Gastrocnemius medialis (tissue), 4 donors: ENCODE measurements at regions of chr4 and their contacts with region 1.

Region 1: DNA sequence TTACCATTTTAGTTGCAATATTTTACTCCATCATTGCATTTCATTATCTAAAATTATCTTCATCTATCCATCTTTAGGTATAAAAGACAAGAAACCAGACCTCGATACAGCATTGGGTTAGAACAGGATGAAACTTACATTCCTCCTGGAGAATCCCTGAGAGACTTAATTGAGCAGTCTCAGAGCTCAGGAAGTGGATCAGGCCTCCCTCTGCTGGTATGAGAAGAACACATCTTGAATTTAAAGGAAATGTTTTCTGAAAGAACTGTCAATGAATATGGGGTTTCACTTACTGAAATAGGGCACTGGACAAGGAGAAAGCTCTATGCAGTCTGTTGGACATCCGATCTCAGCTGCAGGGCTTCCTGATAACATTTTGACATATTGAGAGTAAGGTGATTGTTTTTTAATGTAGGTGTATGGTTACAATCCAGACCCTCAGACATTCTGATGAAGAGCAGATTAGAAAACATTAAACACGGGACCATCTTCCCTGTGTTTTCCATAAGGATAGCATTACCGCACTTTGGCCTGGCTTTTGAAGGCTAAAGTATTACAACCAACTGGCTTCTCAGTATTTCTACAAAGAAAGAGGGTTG is 367.2 kb downstream of the BMPR1B start:
- DNase-seq: no peak
- ATAC-seq: no peak
- H3K4me3 ChIP-seq: no peak overlapping the region
- H3K27ac ChIP-seq: no peak overlapping the region
- H3K4me1 ChIP-seq: no peaks in the 10 kb centered on the region
- H3K27me3 ChIP-seq: no peaks in the 10 kb centered on the region
- CTCF ChIP-seq: peak in 3 of 5 experiments; percentile 28 to 44 (median 30)
- POLR2A ChIP-seq: no peak

Region 2: GRCh38 chr4:93947286-93947685 is 1177.7 kb before region 1 on chr4:
- in situ Hi-C with region 1: no loop called
- intact Hi-C with region 1: no loop called
- DNase-seq: no peak
- ATAC-seq: no peak
- H3K4me3 ChIP-seq: no peak overlapping the region
- H3K27ac ChIP-seq: no peak overlapping the region
- H3K4me1 ChIP-seq: no peaks in the 10 kb centered on the region
- H3K27me3 ChIP-seq: no peaks in the 10 kb centered on the region
- CTCF ChIP-seq: no peak
- POLR2A ChIP-seq: no peak

Region 3: DNA sequence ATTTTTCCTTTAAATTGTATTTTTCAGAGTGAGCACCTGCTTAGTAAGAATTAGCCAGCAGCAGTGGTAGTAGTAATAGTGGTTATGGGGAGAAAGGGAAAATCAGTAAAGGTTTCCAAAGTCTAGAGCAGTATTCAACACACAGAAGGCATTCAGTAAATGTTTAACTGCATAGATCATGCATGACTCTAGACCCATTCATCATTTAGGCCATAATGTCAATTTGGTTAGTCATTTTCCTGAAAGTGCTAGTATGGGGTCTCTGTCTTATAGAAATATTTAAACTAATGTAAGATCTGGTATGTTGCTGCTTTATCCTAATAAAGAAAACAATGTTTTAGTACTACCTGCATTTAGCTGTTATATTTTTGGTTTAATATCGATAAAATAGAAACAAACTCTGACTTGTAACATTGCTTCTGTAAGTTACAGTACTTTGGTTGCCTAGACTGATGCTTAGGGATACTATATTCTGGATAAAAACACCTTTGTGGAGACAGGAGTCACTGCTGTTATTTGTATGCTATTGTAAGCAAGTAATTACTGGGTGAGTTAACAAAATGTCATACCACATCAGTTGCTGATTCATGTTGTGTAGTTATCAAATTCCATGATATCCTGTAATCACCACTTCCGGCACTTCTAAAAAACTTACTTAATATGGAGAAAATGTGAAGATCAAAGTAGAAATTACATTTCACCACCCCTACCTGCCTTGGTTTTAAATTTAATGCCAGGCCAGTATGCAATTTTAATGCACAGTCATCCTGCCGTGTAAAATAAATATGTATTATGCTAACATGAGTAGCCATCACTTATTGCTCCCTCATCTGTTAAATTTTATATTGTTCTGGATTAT is 483.1 kb before region 1 on chr4:
- in situ Hi-C with region 1: loop called in 1 of 4 experiments (anchors 25 kb)
- intact Hi-C with region 1: no loop called
- DNase-seq: no peak
- ATAC-seq: no peak
- H3K4me3 ChIP-seq: no peak overlapping the region
- H3K27ac ChIP-seq: no peak overlapping the region
- H3K4me1 ChIP-seq: peaks cover 0 to 3% of the 10 kb centered on the region in 2 donors
- H3K27me3 ChIP-seq: no peaks in the 10 kb centered on the region
- CTCF ChIP-seq: no peak
- POLR2A ChIP-seq: no peak

Region 4: DNA sequence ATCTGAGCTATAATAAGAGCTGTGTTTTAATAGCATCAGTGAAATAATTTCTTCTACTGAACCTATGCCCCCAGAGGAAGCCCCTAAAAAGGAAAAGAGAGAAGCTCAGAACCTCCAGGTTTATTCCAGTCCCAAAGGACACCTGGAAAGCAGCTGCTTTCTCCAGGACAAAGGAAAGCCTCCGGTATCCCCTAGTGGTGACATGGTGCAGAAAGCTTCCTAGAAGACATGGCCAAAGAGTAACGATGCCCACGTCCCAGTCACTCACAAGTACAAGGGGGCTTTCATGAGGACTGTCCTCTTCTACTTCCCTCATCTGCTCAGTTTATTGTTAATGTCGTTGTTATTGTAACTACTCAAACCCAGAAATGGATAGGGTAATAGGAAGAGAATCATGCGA is 79.9 kb after region 1 on chr4:
- in situ Hi-C with region 1: no loop called
- intact Hi-C with region 1: no loop called
- DNase-seq: no peak
- ATAC-seq: no peak
- H3K4me3 ChIP-seq: no peak overlapping the region
- H3K27ac ChIP-seq: no peak overlapping the region
- H3K4me1 ChIP-seq: no peaks in the 10 kb centered on the region
- H3K27me3 ChIP-seq: no peaks in the 10 kb centered on the region
- CTCF ChIP-seq: no peak
- POLR2A ChIP-seq: no peak

Region 5: DNA sequence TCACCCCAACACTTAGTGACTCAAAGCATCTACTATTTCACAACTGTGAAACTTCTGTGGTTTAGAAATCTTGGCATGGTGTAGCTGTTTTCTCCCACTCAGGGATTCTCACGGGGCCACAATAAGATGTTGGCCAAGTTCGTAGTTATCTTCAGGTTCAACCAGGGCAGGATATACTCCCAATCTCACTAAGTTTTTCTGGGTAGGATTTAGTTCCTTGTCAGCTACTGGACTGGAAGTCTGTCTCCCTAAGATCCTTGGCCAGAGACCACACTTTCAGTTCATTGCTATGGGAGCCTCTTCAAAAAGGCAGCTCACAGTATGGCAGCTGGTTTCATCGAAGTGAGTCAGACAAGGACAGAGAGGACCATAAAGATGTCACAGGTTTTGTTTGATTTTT is 603.1 kb after region 1 on chr4:
- in situ Hi-C with region 1: no loop called
- intact Hi-C with region 1: no loop called
- DNase-seq: peak; percentile 2 to 34
- ATAC-seq: peak; percentile 65 to 75
- H3K4me3 ChIP-seq: no peak overlapping the region
- H3K27ac ChIP-seq: no peak overlapping the region
- H3K4me1 ChIP-seq: no peaks in the 10 kb centered on the region
- H3K27me3 ChIP-seq: no peaks in the 10 kb centered on the region
- CTCF ChIP-seq: no peak
- POLR2A ChIP-seq: no peak